A549 (cell line): ENCODE measurements at regions of chr7 and their contacts with region 1.

Region 1: GRCh38 chr7:4725014-4725849 is 43.1 kb downstream of the FOXK1 start:
- DNase-seq: peak; percentile 71 to 72
- ATAC-seq: peak; percentile 81 to 83
- H3K4me3 ChIP-seq: peak overlapping the region; percentile 43
- H3K27ac ChIP-seq: peak overlapping the region; percentile 80 to 96
- H3K4me1 ChIP-seq: peaks cover 19% of the 10 kb centered on the region
- CTCF ChIP-seq: peak; percentile 10; the same call in 1 of the 3 replicates
- EP300 ChIP-seq: no peak
- POLR2A ChIP-seq: no peak; the same call in 1 of the 2 replicates
- RAD21 ChIP-seq: no peak; a peak in 1 of 5 replicates

Region 2: DNA sequence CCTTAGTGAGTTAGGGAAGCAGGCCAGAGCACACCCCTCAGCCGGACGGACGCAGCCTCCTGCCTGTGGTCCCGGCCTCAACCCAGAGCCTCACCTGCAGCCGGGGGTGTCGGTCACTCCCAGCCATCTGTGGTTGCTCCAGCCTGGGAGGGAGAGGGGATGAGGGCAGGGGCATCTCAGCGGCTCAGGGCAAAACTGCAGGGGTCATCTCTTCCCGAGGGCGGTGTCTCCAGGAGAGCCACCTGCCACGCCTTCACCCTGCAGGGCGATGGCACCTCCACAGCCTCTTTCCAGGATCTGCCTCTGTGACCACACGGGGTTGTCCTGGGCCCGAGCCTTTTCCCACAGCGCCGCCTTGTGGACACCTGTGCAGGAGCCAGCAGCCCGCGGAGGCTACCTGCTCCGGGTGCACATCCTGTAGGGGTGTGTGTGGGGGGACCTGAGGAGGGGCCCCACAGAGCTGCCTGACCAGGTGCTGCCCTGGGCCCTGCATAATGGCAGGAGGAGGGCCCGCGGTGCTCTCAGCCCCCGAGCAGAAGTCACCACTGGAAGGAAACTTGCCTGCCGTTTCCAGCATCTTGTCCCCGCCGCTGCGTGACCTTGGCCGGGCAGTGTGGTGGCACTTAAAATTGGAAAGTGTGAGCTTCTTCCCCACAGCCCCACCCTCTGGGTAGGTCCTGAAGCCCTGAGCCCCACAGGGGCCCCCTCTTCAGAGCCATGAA is 28.6 kb after region 1 on chr7:
- CTCF ChIA-PET with region 1: interaction called, 32 read pairs
- POLR2A ChIA-PET with region 1: no interaction called
- DNase-seq: peak; percentile 82 to 90
- ATAC-seq: peak; percentile 94 to 97
- H3K4me3 ChIP-seq: no peak overlapping the region
- H3K27ac ChIP-seq: peak overlapping the region; percentile 57 to 79
- H3K4me1 ChIP-seq: peaks cover 12% of the 10 kb centered on the region
- CTCF ChIP-seq: peak; percentile 90
- EP300 ChIP-seq: no peak
- POLR2A ChIP-seq: no peak
- RAD21 ChIP-seq: peak; percentile 93 to 94

Region 3: DNA sequence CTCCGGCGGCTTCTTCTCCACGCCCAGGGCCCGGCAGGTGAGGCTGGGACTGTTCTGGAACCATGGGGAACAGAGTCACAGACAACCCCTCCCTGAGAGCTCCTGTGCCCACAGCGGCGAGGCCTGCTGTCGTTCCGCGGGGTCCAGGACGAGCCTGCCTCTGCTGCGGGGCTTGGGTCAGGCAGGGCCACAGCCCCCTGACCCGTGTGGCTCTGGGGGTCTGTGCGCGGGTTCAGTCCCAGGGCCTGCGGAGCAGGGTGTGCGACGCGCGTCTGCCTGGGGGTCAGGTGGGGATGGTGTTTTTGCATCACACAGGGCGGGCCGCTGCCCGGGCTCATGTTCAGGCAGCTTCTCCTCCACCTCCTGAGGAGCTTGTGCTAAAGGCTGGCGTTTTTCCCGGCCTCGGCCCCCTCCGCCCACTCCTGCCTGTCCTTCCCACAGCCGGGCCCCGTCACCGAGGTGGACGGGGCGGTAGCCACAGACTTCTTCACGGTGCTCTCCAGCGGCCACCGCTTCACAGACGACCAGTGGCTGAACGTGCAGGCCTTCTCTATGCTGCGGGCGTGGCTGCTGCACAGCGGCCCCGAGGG is 58.6 kb after region 1 on chr7:
- CTCF ChIA-PET with region 1: no interaction called
- POLR2A ChIA-PET with region 1: no interaction called
- DNase-seq: no peak
- ATAC-seq: no peak
- H3K4me3 ChIP-seq: no peak overlapping the region
- H3K27ac ChIP-seq: no peak overlapping the region
- H3K4me1 ChIP-seq: no peaks in the 10 kb centered on the region
- CTCF ChIP-seq: no peak
- EP300 ChIP-seq: no peak
- POLR2A ChIP-seq: no peak
- RAD21 ChIP-seq: no peak